ENCODE measurements at regions of chr19 and their contacts with region 1.

Region 1: DNA sequence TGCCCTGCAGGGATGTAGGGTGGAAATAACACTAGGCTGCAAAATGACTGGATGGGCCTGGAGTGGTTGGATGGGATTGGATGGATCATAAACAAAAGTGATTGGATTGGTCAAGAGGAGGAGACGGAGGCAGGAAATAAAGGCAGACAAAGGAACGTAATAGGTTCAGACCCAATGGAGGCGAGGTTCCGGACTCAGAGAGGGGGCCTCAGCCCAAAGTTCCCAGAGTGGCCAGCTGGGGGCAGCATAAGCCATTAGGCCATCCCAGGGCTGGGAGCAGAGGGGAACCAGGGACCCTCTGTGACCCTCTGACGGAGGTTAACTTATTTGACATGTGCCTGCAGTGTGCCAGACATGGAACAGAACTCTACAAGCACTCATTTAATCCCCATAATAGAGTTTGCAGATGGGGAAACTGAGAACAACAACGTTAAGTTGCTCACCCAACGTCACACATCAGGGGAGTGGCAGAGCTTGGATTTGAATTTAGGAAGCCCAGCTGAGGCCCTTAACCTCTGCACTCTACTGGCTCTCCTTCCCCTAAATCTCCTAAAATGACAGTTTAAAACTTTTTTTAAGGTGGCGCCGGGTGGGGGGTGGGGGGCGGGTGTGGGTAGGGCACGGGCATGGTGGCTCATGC is 15.3 kb upstream of the MAP1S start:
- DNase-seq: peak; percentile 61 to 84 (median 83)
- H3K4me3 ChIP-seq: no peak overlapping the region
- H3K27ac ChIP-seq: no peak overlapping the region
- H3K4me1 ChIP-seq: peaks cover 0 to 3% (median under 1%) of the 10 kb centered on the region in 4 experiments
- H3K27me3 ChIP-seq: peaks cover 0 to 4% (median 0%) of the 10 kb centered on the region in 5 experiments

Region 2: DNA sequence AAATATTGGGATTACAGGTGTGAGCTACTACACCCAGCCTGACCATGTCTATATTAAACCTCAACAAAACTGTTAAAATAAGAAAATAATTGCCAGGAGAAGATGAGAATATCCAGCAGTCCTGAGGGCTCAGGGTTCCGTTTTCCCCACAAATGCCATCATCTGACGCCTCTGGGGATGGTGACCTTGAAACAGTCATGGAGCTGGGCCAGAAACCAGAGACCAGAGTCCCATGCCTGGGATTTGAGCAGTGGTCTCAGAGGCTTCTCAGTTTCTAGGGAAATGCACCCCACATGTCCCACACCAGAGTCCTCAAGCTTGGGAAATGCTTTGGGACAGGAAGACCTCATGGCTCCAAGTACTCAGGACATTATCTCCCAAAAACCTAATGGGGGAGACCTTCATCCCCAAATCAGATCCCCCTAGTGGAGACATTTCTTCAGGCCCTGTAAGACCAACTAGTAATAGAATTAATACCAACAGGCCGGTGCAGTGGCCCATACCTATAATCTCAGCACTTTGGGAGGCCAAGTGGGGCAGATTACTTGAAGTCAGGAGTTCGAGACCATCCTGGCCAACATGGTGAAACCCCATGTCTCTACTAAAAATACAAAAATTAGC is 12.5 kb after region 1 on chr19:
- CTCF ChIA-PET with region 1: interaction called, 22 read pairs
- POLR2A ChIA-PET with region 1: interaction called, 4 read pairs
- DNase-seq: peak in 1 of 3 donors; percentile 31
- H3K4me3 ChIP-seq: no peak overlapping the region
- H3K27ac ChIP-seq: no peak overlapping the region
- H3K4me1 ChIP-seq: peaks cover 2 to 40% (median 36%) of the 10 kb centered on the region in 4 experiments
- H3K27me3 ChIP-seq: no peaks in the 10 kb centered on the region

Region 3: DNA sequence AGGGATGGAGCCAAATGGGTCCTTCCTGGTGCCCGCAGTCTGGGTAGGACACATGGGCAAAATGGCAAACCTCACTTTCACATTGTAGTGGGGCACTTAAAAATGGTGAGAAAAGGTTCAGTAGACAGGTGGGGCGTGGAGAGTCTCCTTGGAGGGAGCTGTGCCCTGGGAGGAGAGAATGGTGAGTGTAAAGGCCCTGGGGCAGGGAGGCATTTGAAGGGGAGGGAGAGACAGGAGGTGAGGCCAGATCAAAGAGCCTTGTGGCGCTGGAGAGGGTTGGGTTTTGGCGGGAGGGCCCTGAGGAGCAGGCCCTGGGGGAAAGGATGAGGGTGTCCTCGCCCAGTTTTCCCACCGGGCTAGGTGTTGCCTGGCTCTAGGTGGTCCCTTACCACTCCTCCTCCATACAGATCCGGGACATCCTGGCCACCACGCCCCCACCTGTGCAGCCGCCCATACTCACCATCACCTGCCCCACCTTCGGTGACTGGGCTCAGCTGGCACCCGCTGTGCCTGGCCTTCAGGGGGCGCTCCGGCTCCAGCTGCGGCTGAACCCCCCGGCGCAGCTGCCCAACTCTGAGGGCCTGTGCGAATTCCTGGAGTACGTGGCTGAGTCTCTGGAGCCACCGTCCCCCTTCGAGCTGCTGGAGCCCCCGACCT is 21.6 kb after region 1 on chr19:
- CTCF ChIA-PET with region 1: interaction called, 12 read pairs
- POLR2A ChIA-PET with region 1: no interaction called
- DNase-seq: no peak
- H3K4me3 ChIP-seq: no peak overlapping the region
- H3K27ac ChIP-seq: no peak overlapping the region
- H3K4me1 ChIP-seq: peaks cover 0 to 20% (median 19%) of the 10 kb centered on the region in 4 experiments
- H3K27me3 ChIP-seq: no peaks in the 10 kb centered on the region